GM10248 (cell line): ENCODE measurements at regions of chr13 and their contacts with region 1.

Region 1: DNA sequence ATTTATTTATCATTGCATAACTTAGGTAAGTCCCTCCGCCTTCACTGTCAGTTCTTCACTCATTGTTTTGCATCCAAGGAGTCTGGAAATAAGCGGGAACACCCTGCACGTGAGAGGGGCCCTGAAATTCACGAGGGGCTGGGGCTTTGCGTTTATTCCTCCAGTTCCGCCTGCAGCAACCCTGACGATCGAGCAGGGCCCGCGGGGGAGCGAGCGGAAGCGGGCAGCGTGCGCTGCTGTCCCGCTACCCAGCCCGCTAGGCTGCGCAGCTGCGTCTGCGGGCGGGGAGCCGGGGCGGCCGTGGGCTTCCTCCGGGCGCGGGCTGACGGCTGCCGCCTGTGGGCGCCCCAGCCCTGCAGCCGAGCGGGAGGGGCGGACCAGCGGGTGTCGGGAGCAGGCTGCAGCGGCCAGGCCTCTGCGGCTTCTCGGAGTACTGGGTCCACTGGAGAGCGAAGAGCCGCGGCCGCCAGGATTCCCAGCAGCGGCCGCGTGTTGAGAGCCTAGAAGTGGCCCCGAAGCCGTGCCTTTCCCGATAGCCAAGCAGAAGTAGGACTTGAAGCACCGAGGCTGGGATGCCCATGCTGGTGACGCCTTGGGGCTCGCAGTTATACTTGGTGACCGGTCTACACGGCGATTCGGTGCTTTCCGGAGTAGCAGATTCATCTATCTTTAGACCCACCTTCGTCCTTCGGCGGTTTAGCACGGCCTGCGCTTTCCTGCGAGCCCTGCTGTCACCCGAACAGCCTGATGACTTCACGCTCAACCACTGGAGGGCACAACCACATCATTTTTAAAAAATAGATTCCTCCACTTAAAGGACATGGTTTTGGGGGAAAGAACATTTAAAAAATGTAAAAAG is 32.9 kb upstream of the SACS start:
- DNase-seq: peak; percentile 81
- CTCF ChIP-seq: peak; percentile 69

Region 2: GRCh38 chr13:22828081-22828480 is 638.3 kb before region 1 on chr13:
- CTCF ChIA-PET with region 1: no interaction called
- POLR2A ChIA-PET with region 1: no interaction called
- DNase-seq: no peak
- CTCF ChIP-seq: no peak

Region 3: GRCh38 chr13:23433171-23434153 is 32.9 kb before region 1 on chr13 and contains the start of gene SACS:
- CTCF ChIA-PET with region 1: no interaction called
- POLR2A ChIA-PET with region 1: no interaction called
- DNase-seq: no peak
- CTCF ChIP-seq: no peak

Region 4: GRCh38 chr13:23455392-23456185 is 10.8 kb before region 1 on chr13:
- CTCF ChIA-PET with region 1: interaction called, 16 read pairs
- POLR2A ChIA-PET with region 1: no interaction called
- DNase-seq: no peak
- CTCF ChIP-seq: no peak

Region 5: GRCh38 chr13:23558675-23559536 is 92.5 kb after region 1 on chr13:
- CTCF ChIA-PET with region 1: interaction called, 24 read pairs
- POLR2A ChIA-PET with region 1: no interaction called
- DNase-seq: no peak
- CTCF ChIP-seq: no peak

Region 6: GRCh38 chr13:23570099-23570920 is 103.9 kb after region 1 on chr13 and contains the start of gene TNFRSF19:
- CTCF ChIA-PET with region 1: interaction called, 19 read pairs
- POLR2A ChIA-PET with region 1: no interaction called
- DNase-seq: no peak
- CTCF ChIP-seq: no peak

Region 7: GRCh38 chr13:23707674-23708073 is 241.3 kb after region 1 on chr13:
- CTCF ChIA-PET with region 1: interaction called, 11 read pairs
- POLR2A ChIA-PET with region 1: no interaction called
- DNase-seq: no peak
- CTCF ChIP-seq: peak; percentile 31